ENCODE measurements at regions of chr10 and their contacts with region 1.

Region 1: DNA sequence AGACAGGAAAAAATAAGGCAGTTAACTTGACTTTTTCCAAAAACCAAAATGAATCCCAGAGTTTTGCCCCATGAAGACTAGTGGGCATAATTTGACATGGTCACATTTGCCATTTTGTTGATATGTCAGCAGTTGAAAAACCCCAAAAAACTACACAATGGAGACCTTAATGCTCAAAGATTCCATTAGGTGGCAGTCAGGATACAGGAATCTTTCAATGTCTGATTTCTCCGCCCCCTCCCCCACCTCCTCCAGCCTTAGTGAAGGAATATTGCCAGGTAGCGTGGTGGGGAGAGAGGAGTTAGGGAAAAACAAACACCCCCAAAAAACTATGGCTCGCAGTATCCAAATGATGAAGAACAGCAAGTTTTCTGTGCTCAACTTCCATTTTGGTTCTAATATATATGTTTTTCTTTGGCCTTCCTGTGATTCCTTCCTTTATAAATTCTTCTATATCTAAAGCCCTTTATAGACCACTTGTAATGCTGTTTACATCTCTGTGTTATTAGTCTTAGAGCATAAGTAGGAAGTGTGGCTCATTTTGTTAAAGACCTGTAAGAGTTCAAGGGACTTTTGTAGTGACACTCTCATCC is 6.7 kb upstream of the SMNDC1 start:
- DNase-seq: no peak
- H3K4me3 ChIP-seq: no peak overlapping the region
- CTCF ChIP-seq: peak in 1 of 3 donors; percentile 51
- POLR2A ChIP-seq: no peak

Region 2: DNA sequence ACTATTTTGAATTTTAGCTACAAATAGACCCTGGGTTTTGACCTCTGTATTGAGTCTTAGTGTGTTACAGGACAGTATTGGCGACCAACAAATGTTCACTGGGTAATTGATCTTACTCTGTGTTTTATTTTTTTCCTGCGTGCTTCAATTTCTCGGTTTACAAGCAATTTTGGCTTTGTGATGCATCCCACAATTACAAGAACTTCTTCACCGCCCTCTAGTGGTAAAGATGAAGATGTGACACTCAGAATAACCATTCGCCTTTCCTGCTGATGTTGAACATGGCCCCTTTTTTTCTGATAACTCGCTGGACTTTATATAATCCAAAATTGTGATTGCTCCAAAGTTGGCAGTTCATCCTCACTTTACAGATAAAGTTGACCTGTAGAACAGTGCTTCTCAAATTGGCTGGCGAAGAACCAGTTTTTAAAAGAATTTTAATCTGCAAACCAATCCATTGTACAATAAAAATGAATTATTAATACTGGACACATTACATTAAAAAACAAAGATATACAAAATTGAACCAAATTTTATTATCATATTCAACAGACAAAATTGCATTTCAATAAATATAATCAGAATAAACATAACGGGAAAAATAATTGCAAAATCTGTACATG is 235.8 kb after region 1 on chr10:
- intact Hi-C with region 1: loop called (anchors 5 kb)
- DNase-seq: no peak
- H3K4me3 ChIP-seq: no peak overlapping the region
- CTCF ChIP-seq: peak in 1 of 3 donors; percentile 64
- POLR2A ChIP-seq: no peak

Measured in lower leg skin (tissue), 4 donors.